Cardiac septum (tissue), 1 donor: ENCODE measurements at regions of chr16 and their contacts with region 1.

Region 1: DNA sequence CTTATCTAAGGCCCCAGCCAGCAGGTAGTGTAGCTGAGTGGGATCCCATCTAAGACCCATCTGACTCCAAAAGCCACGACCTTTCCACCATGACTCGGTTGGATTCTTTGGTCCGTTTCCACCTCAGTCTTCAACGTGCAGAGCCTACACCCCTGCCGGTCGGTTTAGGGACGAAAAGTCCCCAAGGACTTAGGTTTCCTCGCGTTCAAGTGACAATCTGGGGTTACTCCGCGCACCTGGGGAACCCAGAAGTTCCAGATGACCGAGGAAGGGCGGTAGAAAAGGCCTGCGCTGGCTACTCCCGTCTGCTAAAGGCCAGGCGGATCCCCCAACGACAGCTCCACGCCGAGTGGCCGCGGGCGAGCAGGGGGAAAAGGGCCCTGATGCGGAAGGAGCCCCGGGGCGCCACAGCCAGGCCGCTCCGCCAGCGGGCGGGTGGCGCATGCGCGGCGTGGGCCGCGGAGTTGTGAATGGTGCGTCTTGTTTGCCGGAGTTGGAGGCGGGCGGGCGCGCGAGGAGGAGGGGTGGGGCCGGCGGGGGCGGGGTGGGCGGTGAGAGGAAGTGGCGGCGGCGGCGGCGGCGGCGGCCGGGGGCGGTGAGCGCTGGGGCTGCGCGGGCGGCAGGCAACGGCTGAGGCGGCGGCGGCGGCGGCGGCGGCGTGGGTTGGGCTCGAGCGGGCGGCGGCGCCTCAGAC is at the start of gene CBFB:
- DNase-seq: peak; percentile 97
- total RNA-seq, gene CBFB: 33.7 TPM

Region 2: GRCh38 chr16:66988197-66988788 is 40.4 kb before region 1 on chr16 and contains the start of gene CES4A:
- intact Hi-C with region 1: no loop called
- DNase-seq: no peak
- total RNA-seq, gene CES4A: 11.9 TPM

Region 3: DNA sequence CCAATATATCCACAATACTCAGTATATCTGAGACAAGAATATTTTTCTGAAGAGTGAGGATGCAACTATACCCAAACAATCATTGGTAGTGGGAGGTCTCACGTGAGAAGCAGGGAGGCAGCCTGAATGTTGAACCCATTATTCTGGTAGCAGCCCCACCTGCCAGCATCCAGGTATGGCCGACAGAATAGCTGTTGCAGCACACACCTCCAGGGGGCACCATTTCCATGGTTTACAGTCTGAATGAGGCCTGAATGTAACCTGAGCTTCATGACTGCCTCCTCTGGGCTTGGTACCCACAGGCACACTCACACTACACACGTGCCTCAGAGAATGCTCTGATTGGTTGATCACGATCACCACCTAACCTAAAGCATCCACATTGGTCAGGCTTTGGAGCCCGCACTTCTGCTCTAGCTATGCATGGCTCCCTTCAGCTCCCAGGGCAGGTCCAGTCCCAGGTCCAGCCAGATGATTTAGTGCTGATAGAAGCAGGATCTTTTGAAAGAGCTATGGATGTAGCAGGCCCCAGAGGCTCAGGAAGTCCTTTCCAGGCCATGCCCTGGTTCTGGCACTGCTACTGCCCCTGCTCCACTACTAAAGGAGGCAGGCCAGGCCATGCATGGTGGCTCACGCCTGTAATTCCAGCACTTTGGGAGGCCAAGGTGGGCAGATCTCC is 10.8 kb before region 1 on chr16:
- intact Hi-C with region 1: loop called (anchors 2 kb)
- DNase-seq: peak; percentile 77

Region 4: GRCh38 chr16:67109407-67110135 is 80.9 kb after region 1 on chr16 and contains the start of gene PHAF1:
- intact Hi-C with region 1: loop called (anchors 5 kb)
- DNase-seq: peak; percentile 98
- total RNA-seq, gene PHAF1: 8.8 TPM